ENCODE measurements at regions of chr3 and their contacts with region 1.

Region 1: DNA sequence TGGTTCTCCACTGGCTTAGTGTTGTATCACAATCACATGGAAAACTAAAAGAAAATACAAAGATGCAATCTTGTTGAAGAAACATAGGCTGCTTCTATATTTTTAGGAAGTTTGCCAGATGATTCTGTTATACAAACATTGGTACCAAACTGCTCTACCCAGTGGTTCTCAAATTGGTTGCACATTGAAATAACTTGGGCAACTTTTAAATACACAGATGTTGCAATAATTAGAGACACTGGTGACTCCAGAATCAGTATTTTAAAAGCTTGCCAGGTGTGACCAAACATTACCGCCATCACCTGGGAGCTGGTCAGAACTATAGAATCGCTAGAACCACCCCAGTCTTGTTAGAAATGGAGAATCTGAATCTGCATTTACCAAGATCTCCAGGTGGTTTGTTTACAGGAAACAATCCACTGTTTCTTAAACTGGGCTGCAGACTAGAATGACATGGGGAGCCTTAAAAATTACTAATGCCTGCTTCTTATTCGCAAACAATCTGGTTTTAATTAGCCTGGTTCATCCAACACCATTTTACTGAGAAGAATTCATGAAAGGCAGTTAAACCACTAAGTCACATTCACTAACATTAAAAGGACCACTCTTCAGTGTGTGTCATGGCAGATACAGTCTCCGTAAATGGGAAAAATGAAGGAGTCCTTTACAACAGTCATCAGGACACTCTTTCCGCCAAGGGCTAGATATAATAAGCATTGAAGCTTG is 76.5 kb downstream of the ACAP2 start:
- DNase-seq: no peak
- ATAC-seq: no peak
- H3K4me3 ChIP-seq: no peak overlapping the region
- H3K27ac ChIP-seq: no peak overlapping the region
- H3K4me1 ChIP-seq: no peaks in the 10 kb centered on the region
- H3K27me3 ChIP-seq: no peaks in the 10 kb centered on the region
- CTCF ChIP-seq: no peak
- POLR2A ChIP-seq: no peak
- RAD21 ChIP-seq: no peak

Region 2: DNA sequence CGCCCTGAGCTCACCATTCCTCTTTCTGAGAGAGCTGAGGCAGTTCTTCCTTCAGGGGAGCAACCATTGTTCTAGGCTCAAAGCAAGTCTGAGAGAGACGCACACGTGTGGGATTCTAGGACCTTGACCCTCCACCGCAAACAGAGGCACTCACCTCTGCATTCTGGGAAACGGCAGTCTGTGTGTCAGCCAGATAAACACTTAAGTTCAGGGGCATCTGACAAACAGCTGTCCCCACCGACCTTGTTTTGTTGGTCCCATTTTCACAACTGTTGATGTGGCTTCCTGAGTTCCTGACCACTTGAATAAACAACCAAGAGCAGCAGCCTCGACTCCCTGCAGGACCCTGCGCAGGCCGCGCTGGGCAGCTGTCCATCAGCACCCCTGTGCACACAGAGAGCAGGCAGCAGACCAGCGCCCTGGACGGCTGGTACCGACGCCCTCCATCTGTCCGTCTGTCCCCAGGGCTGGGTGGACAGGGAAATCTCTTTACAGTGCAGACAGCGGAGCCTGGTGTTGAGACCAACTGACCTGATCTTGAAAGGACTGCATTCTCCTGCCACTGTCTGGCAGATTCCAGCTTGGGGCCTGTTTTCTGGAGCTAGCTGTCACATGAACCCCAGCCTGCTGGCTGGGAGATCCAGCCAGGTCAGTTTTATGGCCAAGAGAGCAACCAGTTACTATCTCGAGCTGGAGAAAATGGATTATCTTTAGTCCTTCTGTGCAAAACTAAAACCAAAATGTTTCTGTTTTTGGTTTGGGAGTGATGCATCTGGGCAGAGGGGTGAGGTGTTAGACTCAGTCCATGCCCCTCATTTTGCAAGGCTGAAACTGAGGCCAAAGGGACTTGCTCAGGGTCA is 616.5 kb before region 1 on chr3:
- CTCF ChIA-PET with region 1: no interaction called
- POLR2A ChIA-PET with region 1: no interaction called
- dilution Hi-C with region 1: no loop called
- in situ Hi-C with region 1: no loop called
- intact Hi-C with region 1: no loop called
- DNase-seq: no peak
- ATAC-seq: no peak; the same call in 1 of the 2 replicates
- H3K4me3 ChIP-seq: no peak overlapping the region
- H3K27ac ChIP-seq: no peak overlapping the region
- H3K4me1 ChIP-seq: no peaks in the 10 kb centered on the region
- H3K27me3 ChIP-seq: peaks cover 50% of the 10 kb centered on the region
- CTCF ChIP-seq: no peak
- POLR2A ChIP-seq: no peak
- RAD21 ChIP-seq: no peak

Region 3: DNA sequence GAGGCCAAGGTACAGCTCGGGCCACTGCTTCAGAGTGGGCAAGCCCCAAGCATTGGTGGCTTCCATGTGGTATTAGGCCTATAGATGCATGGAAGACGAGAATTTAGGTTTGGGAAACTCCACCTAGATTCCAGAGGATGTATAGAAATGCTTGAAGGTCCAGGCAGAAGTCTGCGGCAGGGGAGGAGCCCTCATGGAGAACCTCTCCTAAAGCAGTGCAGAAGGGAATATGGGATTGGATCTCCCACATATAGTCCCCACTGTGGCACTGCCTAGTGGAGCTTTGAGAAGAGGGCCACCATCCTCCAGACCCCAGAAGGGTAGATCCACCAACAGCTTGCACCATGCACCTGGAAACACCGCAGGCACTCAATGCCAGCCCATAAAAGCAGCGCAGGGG is 47.3 kb before region 1 on chr3:
- CTCF ChIA-PET with region 1: no interaction called
- POLR2A ChIA-PET with region 1: no interaction called
- dilution Hi-C with region 1: no loop called
- in situ Hi-C with region 1: no loop called
- intact Hi-C with region 1: no loop called
- DNase-seq: no peak
- ATAC-seq: no peak
- H3K4me3 ChIP-seq: no peak overlapping the region
- H3K27ac ChIP-seq: no peak overlapping the region
- H3K4me1 ChIP-seq: no peaks in the 10 kb centered on the region
- H3K27me3 ChIP-seq: no peaks in the 10 kb centered on the region
- CTCF ChIP-seq: no peak
- POLR2A ChIP-seq: no peak
- RAD21 ChIP-seq: no peak

Region 4: GRCh38 chr3:195542698-195543499 is 176.5 kb after region 1 on chr3 and contains the start of gene PPP1R2:
- CTCF ChIA-PET with region 1: no interaction called
- POLR2A ChIA-PET with region 1: interaction called, 14 read pairs
- dilution Hi-C with region 1: no loop called
- in situ Hi-C with region 1: no loop called
- intact Hi-C with region 1: no loop called
- DNase-seq: peak; percentile 86
- ATAC-seq: peak; percentile 96
- H3K4me3 ChIP-seq: peak within 1 kb of the TSS; percentile 83
- H3K27ac ChIP-seq: peak within 1 kb of the TSS; percentile 70
- H3K4me1 ChIP-seq: peaks cover 4% of the 10 kb centered on the region
- H3K27me3 ChIP-seq: peaks cover 4% of the 10 kb centered on the region; the same call in 1 of the 2 replicates
- CTCF ChIP-seq: no peak
- POLR2A ChIP-seq: peak; percentile 96
- RAD21 ChIP-seq: no peak
- total RNA-seq, gene PPP1R2: 36.0 and 55.3 TPM in 2 replicates

Region 5: GRCh38 chr3:195616712-195617086 is 250.3 kb after region 1 on chr3:
- CTCF ChIA-PET with region 1: no interaction called
- POLR2A ChIA-PET with region 1: no interaction called
- dilution Hi-C with region 1: no loop called
- in situ Hi-C with region 1: no loop called
- intact Hi-C with region 1: no loop called
- DNase-seq: no peak
- ATAC-seq: no peak
- H3K4me3 ChIP-seq: no peak overlapping the region
- H3K27ac ChIP-seq: no peak overlapping the region
- H3K4me1 ChIP-seq: no peaks in the 10 kb centered on the region
- H3K27me3 ChIP-seq: peaks cover 7% of the 10 kb centered on the region; the same call in 1 of the 2 replicates
- CTCF ChIP-seq: no peak
- POLR2A ChIP-seq: no peak
- RAD21 ChIP-seq: no peak

Region 6: GRCh38 chr3:195738274-195739044 is 372.1 kb after region 1 on chr3:
- CTCF ChIA-PET with region 1: interaction called, 10 read pairs
- POLR2A ChIA-PET with region 1: no interaction called
- dilution Hi-C with region 1: no loop called
- in situ Hi-C with region 1: no loop called
- intact Hi-C with region 1: no loop called
- DNase-seq: no peak
- ATAC-seq: no peak
- H3K4me3 ChIP-seq: no peak overlapping the region
- H3K27ac ChIP-seq: no peak overlapping the region
- H3K4me1 ChIP-seq: no peaks in the 10 kb centered on the region
- H3K27me3 ChIP-seq: peaks cover 56% of the 10 kb centered on the region
- CTCF ChIP-seq: no peak
- POLR2A ChIP-seq: no peak
- RAD21 ChIP-seq: no peak

Measured in IMR-90 (cell line).